Ovary (tissue), 10 donors: ENCODE measurements at regions of chr12 and their contacts with region 1.

Region 1: DNA sequence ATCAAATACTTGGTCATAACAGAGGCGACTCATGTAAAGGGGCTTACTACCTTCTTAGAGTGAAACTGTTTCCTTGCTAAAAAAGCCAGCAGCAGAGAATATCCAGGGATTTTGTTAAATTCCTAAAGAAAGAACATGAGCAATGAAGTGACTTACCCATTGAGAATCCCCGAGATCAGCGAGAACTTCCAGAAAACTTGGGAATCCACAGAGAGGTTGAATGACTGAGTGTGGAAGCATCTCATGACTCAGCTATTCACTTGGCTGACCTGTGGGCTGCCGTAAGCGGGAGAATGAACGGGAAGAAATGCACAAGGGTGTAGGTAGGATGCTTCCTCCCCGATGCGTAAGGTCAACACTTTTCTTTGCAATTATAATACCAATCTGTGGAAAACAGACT is 85.3 kb upstream of the KCNA1 start:
- DNase-seq: no peak
- H3K4me3 ChIP-seq: no peak overlapping the region
- H3K27ac ChIP-seq: no peak overlapping the region
- H3K4me1 ChIP-seq: no peaks in the 10 kb centered on the region
- H3K27me3 ChIP-seq: no peaks in the 10 kb centered on the region
- CTCF ChIP-seq: no peak
- EP300 ChIP-seq: no peak
- POLR2A ChIP-seq: no peak

Region 2: DNA sequence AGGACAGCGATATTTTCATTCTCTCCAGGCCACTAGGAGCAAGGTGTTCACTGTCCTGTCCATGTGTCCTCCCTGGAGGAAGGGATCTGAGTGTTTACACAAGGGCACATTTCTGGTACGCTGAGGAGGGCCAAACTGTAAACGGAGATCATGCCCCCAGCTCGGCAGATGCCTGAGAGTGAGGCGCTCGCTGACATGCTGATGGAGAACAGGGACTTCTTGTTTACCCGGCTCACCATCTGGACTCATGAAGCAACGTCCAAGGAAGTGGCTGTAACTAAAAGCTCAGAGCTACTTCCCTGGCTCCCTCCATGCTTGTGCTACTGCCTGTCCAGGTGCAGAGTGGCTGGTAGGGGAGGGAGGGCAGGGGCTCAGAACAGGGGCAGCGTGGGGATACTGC is 41.9 kb after region 1 on chr12:
- intact Hi-C with region 1: loop called in 1 of 4 experiments (anchors 2 kb)
- DNase-seq: no peak
- H3K4me3 ChIP-seq: no peak overlapping the region
- H3K27ac ChIP-seq: no peak overlapping the region
- H3K4me1 ChIP-seq: no peaks in the 10 kb centered on the region
- H3K27me3 ChIP-seq: no peaks in the 10 kb centered on the region
- CTCF ChIP-seq: no peak
- EP300 ChIP-seq: no peak
- POLR2A ChIP-seq: no peak

Region 3: DNA sequence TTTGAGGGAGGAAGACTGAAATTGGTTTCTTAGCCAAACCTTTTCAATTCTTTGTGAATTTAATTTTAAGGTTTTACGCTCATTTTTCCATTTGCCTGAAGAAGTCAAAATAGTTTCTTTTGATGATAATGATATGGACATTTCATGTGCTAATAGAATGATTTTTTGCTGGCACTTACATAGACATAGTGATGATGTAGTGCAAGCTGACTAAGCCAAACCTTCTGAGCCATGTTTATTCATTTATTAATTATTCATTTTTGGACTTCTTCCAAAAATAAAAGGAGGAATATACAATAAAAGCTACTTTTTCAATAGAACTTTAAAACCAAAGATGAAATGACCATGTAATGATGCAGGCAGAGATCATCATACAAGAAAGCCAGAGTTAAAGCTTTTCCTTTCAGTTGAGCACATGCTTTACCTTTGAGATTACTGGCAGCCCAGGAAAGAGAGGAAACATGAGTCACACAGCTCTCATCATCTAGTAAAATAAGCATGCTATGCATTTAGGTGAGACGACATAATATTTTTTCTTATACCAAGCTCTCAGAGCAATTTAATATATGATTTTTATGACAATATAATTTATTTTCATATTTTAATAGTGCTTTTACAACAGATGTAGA is 110.1 kb after region 1 on chr12:
- intact Hi-C with region 1: no loop called
- DNase-seq: no peak
- H3K4me3 ChIP-seq: no peak overlapping the region
- H3K27ac ChIP-seq: no peak overlapping the region
- H3K4me1 ChIP-seq: no peaks in the 10 kb centered on the region
- H3K27me3 ChIP-seq: no peaks in the 10 kb centered on the region
- CTCF ChIP-seq: no peak
- EP300 ChIP-seq: no peak
- POLR2A ChIP-seq: no peak